ENCODE measurements at regions of chr19 and their contacts with region 1.

Region 1: DNA sequence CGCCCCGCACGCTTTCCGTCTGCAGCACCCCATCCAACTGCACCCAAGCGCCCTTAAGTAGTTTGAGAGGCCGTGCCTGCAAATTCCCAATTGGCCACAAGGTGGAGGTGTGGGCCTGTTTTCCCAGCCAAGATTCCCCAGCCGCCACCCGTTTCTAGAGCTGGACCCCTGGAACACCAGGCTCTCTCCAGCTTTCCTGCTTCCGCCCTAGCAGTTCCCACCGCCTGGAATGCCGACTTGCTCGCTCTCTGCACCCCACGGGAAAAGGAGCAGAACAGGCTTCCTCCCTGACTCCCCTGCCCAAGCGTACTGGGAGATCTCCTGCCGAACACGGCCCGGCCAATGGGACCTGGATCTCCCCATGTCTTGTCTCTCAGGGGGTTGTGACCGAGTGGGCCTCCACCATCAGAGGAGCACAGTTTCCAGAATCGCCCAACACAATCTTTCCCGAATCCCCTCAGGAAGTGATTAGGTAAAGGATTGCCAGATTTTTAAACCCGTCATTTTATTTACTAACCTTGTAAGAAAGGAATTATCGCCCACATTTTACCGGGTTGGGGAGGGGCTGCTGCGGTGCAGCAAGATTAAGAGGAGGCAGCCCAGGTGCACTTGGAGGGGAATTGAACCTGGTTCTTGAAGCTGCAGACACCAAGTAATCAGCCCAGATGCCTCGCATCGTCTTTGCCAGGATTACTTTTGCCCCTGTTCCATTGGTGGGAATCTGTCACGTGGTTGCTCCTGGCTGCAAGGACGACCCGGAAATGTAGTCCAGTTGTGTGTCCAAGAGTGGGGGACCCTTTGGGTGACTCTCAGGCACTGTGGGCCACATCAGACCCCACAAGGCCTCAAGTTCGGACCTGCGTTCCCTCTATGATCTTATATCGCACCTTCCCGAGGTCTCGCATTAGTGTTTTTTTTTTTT is 3.5 kb upstream of the NAPSA start:
- ATAC-seq: peak; percentile 84 to 94 (median 87)
- H3K4me3 ChIP-seq: peak overlapping the region; percentile 39 to 47 (median 46)
- H3K27ac ChIP-seq: peak overlapping the region in 1 of 2 donors; percentile 61
- H3K4me1 ChIP-seq: peaks cover 0 to 7% of the 10 kb centered on the region in 2 donors

Region 2: GRCh38 chr19:50461066-50461875 is 92.4 kb after region 1 on chr19:
- in situ Hi-C with region 1: loop called in 3 of 9 experiments (anchors 10 to 25 kb)
- ATAC-seq: peak; percentile 17 to 83 (median 34)
- H3K4me3 ChIP-seq: no peak overlapping the region
- H3K27ac ChIP-seq: no peak overlapping the region
- H3K4me1 ChIP-seq: peaks cover 8 to 10% of the 10 kb centered on the region in 2 donors

Region 3: GRCh38 chr19:50794439-50795237 is 425.7 kb after region 1 on chr19:
- in situ Hi-C with region 1: loop called in 6 of 9 experiments (anchors 10 to 25 kb)
- ATAC-seq: peak in 4 of 8 experiments; percentile 11 to 40 (median 28)
- H3K4me3 ChIP-seq: no peak overlapping the region
- H3K27ac ChIP-seq: no peak overlapping the region
- H3K4me1 ChIP-seq: peaks cover 0 to 2% of the 10 kb centered on the region in 2 donors